ENCODE measurements at regions of chr2 and their contacts with region 1.

Region 1: DNA sequence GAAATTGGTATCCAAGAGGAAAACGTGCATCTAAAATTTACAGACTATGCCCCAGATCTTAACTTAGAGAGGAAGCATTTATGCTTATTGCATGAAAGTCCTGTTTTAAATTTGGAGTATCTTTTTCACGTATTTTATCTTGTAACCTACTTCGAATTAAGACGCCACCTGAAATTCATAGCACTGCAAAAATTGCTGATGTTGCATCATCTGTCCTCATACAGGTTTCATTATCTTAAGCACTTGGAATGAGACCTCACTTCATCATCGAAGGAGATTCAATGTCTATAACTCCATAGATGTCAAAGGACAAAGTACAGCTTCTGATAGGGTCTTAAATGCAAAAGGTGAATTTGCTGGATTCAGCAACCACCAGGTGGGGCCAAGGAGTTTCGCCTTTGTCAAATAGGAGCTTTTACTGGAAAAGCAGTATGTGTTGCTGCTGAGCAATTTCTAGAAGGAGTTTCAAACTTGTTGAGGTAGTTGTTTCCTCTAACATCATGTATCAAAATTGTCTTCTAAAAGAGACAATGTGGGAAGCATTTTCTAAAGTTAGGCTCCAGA is 106.4 kb upstream of the CCDC85A start:
- DNase-seq: peak; percentile 45 to 70 (median 63)
- H3K4me3 ChIP-seq: no peak overlapping the region
- H3K27ac ChIP-seq: no peak overlapping the region
- H3K4me1 ChIP-seq: no peaks in the 10 kb centered on the region
- H3K27me3 ChIP-seq: peaks cover 0 to 3% (median 0%) of the 10 kb centered on the region in 5 experiments

Region 2: DNA sequence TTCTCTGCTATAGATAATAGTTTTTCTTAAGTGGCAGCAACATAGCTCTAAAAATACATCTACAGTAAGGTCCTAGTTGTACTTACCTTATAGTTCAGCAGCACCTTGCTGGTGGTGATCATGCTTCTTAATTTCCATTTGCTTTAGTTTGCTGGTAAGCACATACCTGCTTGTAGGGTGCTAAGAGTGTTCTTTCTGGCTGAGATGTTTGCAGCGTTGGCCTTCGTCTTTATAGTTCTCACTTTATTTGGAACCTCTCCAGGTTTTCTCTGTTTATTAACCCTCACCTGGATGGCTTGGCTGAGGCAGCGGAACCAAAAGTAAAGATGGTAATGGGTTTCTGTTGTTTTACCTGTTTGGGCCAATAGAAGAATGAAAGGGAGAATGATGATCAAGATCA is 30.3 kb before region 1 on chr2:
- CTCF ChIA-PET with region 1: no interaction called
- POLR2A ChIA-PET with region 1: no interaction called
- DNase-seq: no peak
- H3K4me3 ChIP-seq: no peak overlapping the region
- H3K27ac ChIP-seq: no peak overlapping the region
- H3K4me1 ChIP-seq: no peaks in the 10 kb centered on the region
- H3K27me3 ChIP-seq: peaks cover 0 to 5% (median 1%) of the 10 kb centered on the region in 5 experiments

Region 3: GRCh38 chr2:56133931-56134629 is 56.6 kb after region 1 on chr2:
- CTCF ChIA-PET with region 1: interaction called, 16 read pairs
- POLR2A ChIA-PET with region 1: interaction called, 3 read pairs
- DNase-seq: peak; percentile 54 to 90 (median 74)
- H3K4me3 ChIP-seq: peak overlapping the region in 1 of 7 experiments; percentile 17
- H3K27ac ChIP-seq: peak overlapping the region in 1 of 2 experiments; percentile 16
- H3K4me1 ChIP-seq: peaks cover 0 to 23% (median 16%) of the 10 kb centered on the region in 4 experiments
- H3K27me3 ChIP-seq: no peaks in the 10 kb centered on the region

Region 4: DNA sequence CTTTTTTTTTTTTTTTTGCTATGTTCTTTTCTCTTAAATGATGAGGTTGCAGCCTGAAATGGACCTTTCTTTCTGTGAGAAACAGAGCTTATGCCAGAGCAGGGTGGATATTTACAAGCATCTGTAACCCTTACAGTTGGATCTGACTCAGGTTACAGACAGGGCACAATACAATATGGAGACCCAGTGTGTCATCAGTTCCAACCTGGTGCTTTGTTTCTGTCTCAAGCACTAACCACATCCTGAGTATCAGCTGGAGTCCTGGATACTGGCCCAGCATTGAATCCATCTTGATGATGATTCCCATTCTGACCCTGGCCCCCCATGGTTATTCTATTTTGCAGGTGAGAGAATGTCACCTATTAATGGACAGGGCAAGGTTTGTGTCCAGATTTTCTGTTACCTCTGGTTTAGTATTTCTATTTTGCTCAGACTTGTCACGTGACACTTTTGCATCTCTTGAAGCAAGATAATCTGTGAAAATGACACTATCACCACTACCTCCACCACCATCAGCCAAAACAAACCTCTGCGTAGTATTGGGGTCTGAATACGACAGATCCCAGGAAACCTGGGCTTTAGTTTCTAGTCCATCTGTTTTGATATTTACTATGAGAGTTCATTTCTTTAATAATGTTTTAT is 280.3 kb after region 1 on chr2:
- CTCF ChIA-PET with region 1: no interaction called
- POLR2A ChIA-PET with region 1: no interaction called
- DNase-seq: no peak
- H3K4me3 ChIP-seq: no peak overlapping the region
- H3K27ac ChIP-seq: no peak overlapping the region
- H3K4me1 ChIP-seq: no peaks in the 10 kb centered on the region
- H3K27me3 ChIP-seq: no peaks in the 10 kb centered on the region

Measured in common myeloid progenitor, CD34-positive (primary cell).